ENCODE measurements at regions of chr3 and their contacts with region 1.

Region 1: GRCh38 chr3:143644370-143645089 is 203.7 kb downstream of the SLC9A9 start:
- DNase-seq: peak; percentile 85
- H3K4me3 Mint-ChIP-seq: no peak overlapping the region
- H3K27ac Mint-ChIP-seq: no peak overlapping the region
- H3K4me1 Mint-ChIP-seq: peaks cover 17% of the 10 kb centered on the region
- H3K27me3 Mint-ChIP-seq: no peaks in the 10 kb centered on the region
- CTCF ChIP-seq: peak; percentile 80

Region 2: DNA sequence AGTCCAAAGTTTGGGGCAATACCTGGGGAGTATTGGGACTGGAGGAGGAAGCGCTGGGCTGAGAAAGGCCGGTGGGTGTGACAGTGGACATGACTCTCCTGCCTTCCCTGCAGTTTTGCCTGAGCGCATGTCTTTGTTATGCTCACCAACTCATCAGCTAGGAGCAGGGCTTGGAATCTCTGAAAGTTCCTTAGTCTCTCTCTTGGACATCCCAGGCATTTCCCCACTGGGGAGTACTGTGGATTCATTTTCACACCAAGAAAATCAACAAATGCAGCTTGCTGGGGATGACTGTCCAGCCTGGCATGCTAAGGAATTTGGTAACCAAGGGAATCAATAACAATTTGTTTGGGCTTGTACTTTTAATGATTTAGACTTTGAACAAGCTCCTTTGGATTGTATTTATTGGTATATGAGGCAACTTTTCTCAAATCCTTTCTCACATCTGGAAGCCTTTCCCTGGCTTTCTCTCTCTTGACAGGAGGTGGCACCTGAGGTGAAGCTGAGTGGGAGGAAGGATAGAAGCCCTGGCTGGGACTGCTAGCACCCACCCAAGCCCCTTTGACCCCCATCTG is 573.5 kb before region 1 on chr3:
- CTCF ChIA-PET with region 1: interaction called, 8 read pairs
- intact Hi-C with region 1: loop called (anchors 2 kb)
- DNase-seq: peak; percentile 35
- H3K4me3 Mint-ChIP-seq: no peak overlapping the region
- H3K27ac Mint-ChIP-seq: no peak overlapping the region
- H3K4me1 Mint-ChIP-seq: peaks cover 8% of the 10 kb centered on the region
- H3K27me3 Mint-ChIP-seq: no peaks in the 10 kb centered on the region
- CTCF ChIP-seq: no peak

Region 3: DNA sequence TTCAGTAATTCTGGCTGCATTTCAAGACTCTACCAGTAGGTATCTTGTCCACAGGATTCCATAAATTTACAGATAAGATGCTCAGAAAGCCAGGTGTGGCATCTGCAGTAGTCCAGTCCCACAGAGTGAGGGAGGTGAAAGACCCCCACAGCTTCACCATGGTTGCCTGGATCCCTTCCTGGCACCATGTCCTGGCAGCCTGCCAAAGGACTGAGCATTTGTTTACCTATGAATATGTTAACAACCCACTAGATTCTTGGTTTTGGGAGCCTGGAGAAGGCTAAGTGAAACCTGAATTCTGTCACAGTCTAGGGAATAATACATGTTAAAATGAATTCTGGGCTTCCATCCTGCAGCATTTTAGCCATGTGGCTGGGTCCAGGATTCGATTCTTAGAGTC is 510.1 kb before region 1 on chr3:
- CTCF ChIA-PET with region 1: interaction called, 3 read pairs
- intact Hi-C with region 1: loop called (anchors 5 kb)
- DNase-seq: peak; percentile 32
- H3K4me3 Mint-ChIP-seq: no peak overlapping the region
- H3K27ac Mint-ChIP-seq: no peak overlapping the region
- H3K4me1 Mint-ChIP-seq: peaks cover 21% of the 10 kb centered on the region
- H3K27me3 Mint-ChIP-seq: peaks cover 60% of the 10 kb centered on the region
- CTCF ChIP-seq: no peak

Region 4: DNA sequence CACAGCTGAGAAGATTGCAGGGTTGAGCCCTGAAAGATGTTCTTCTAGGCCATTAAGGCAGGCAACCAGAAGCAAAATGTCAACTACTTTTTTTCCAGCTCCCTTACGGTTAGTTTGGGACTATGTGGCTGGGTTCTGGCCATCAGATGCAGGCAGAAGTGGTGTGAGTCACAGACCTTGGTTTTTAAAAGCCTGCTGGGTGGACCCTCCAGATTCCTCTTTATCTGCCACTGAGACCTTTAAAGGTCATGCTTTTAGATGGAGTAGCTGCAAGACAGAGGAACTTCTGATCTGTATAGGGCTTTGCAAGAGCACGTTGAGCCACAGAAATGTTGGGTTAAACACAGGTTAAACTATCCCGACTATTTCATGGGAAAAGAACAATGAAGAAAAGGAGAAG is 422.0 kb before region 1 on chr3:
- CTCF ChIA-PET with region 1: no interaction called
- intact Hi-C with region 1: loop called (anchors 5 kb)
- DNase-seq: no peak
- H3K4me3 Mint-ChIP-seq: no peak overlapping the region
- H3K27ac Mint-ChIP-seq: no peak overlapping the region
- H3K4me1 Mint-ChIP-seq: no peaks in the 10 kb centered on the region
- H3K27me3 Mint-ChIP-seq: peaks cover 25% of the 10 kb centered on the region
- CTCF ChIP-seq: no peak

Region 5: DNA sequence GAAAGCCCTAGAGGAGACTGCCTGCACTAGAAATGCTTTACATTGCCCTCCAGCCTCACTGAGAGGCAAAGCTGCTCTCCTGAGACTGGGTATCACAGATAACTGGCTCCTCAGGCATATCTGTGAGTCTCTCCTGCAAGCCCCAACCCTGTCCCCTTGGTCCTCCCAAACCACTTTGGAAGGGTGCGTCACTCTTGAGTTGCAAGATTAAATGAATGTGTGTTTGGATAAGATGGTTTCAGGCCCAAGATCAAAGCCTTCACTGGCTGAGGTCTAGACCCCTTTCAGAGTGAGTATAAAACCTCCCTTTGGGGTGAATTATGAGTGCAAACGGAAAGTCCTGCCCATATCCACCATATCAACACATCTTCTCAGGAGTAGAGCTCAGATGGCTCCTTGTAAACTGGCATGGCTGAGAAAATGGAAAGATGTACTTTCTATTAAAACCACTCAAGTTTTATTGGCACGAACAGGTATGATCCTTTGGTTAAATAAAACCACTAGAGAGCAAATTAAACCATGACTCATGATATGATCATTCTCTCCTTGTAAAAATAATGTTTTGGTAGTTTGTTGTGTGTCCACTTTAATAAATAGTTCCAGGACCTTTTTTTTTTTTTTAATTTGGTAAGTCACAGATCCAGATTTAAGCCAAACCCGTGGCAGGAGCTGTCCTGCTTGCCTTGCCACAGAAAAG is 360.9 kb before region 1 on chr3:
- CTCF ChIA-PET with region 1: no interaction called
- intact Hi-C with region 1: loop called (anchors 10 kb)
- DNase-seq: no peak
- H3K4me3 Mint-ChIP-seq: no peak overlapping the region
- H3K27ac Mint-ChIP-seq: no peak overlapping the region
- H3K4me1 Mint-ChIP-seq: peaks cover 12% of the 10 kb centered on the region
- H3K27me3 Mint-ChIP-seq: peaks cover 57% of the 10 kb centered on the region
- CTCF ChIP-seq: no peak

Region 6: DNA sequence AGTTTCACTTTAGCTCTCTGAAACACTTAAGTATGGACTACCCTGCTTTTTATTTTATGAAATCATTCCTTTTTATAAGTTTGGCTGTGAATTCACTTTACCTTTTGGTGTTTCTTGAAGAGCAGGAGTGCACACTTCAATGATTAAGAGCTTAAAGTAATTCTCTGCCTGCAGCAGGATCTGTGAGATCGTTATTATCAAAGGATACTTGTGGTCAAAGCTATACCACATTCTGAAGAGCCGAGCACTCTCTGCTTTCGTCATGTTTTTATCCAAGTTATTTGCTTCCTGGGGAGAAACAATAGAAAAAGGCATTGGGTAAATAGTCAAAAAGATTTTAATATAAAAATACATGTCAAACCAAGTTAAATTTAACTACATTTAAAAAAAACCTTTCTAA is 281.3 kb before region 1 on chr3:
- CTCF ChIA-PET with region 1: no interaction called
- intact Hi-C with region 1: loop called (anchors 5 kb)
- DNase-seq: no peak
- H3K4me3 Mint-ChIP-seq: no peak overlapping the region
- H3K27ac Mint-ChIP-seq: no peak overlapping the region
- H3K4me1 Mint-ChIP-seq: peaks cover 16% of the 10 kb centered on the region
- H3K27me3 Mint-ChIP-seq: no peaks in the 10 kb centered on the region
- CTCF ChIP-seq: no peak

Region 7: GRCh38 chr3:143433787-143434378 is 210.6 kb before region 1 on chr3:
- CTCF ChIA-PET with region 1: interaction called, 6 read pairs
- intact Hi-C with region 1: loop called (anchors 1 kb)
- DNase-seq: peak; percentile 45
- H3K4me3 Mint-ChIP-seq: no peak overlapping the region
- H3K27ac Mint-ChIP-seq: no peak overlapping the region
- H3K4me1 Mint-ChIP-seq: peaks cover 23% of the 10 kb centered on the region
- H3K27me3 Mint-ChIP-seq: no peaks in the 10 kb centered on the region
- CTCF ChIP-seq: peak; percentile 45

Region 8: DNA sequence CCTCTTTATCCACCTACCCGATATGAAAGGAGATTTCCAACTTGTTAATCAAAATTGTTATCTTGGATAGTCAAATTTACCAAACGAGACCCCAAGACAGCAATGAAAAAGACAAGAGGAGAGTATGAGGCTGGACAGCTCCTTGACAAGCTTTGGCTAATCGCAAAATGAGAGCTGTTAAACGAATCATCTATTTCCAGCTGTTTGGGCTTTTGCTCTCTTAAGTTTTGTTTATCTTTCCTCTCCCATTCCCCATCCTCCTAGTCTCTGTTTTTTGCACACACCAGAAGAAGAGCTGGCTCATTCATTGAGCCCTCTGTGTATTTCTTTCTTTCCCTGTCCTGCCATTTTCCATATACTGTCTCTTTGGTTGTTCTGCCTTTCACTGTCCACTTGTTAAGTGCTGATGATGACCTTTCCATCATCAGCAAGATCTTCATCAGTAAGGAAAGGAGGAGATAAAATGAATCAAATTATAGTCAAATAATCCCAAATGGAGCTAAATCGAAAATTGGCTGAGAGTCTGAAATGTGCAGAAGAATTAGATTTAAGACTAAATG is 42.2 kb after region 1 on chr3:
- CTCF ChIA-PET with region 1: no interaction called
- intact Hi-C with region 1: no loop called
- DNase-seq: no peak
- H3K4me3 Mint-ChIP-seq: no peak overlapping the region
- H3K27ac Mint-ChIP-seq: no peak overlapping the region
- H3K4me1 Mint-ChIP-seq: no peaks in the 10 kb centered on the region
- H3K27me3 Mint-ChIP-seq: peaks cover 16% of the 10 kb centered on the region
- CTCF ChIP-seq: no peak

Region 9: DNA sequence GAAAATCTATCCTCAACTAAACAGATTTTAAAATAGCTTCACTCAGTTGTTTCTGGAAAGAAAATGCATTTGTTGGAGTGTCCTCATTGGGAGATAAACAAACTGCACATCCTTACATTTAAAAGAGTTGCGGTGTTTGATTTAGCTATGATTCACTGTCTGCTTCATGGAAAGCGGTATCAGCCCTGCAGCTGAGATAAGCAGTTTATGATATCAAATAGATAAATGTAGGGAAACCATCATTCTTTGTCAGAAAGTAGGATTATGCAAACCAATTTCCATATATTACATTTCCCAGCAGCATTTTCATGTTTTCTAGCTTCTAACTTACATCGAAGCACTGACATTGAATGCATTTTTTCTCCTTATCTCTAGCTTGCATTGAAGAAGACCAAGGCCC is 1026.0 kb after region 1 on chr3:
- CTCF ChIA-PET with region 1: no interaction called
- intact Hi-C with region 1: no loop called
- DNase-seq: no peak
- H3K4me3 Mint-ChIP-seq: no peak overlapping the region
- H3K27ac Mint-ChIP-seq: no peak overlapping the region
- H3K4me1 Mint-ChIP-seq: no peaks in the 10 kb centered on the region
- H3K27me3 Mint-ChIP-seq: no peaks in the 10 kb centered on the region
- CTCF ChIP-seq: no peak

Measured in Calu3 (cell line).